ENCODE measurements at regions of chr3 and their contacts with region 1.

Region 1: DNA sequence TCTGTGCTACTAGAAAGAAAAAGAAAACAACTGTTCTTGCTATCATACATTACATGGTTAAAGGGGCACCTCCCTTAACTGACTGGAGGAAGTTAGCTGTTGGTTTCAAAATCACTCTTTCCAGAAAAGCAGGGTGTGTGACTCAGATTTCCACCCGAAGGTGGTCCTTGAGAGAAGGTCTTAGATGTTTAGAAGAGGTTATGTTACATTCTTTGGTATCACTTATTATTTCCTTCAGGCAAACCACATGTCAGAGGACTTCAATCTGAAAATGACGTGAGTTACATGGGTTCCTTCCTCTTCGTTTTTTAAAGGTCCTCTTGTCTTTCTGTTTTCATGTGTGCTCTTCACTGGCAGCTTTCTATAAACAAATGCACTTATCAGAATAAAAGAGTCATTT is 307.9 kb upstream of the CBLB start:
- DNase-seq: peak; percentile 91
- H3K4me3 Mint-ChIP-seq: peak overlapping the region; percentile 77
- H3K27ac Mint-ChIP-seq: peak overlapping the region; percentile 93
- H3K4me1 Mint-ChIP-seq: peaks cover 53% of the 10 kb centered on the region
- H3K27me3 Mint-ChIP-seq: no peaks in the 10 kb centered on the region

Region 2: DNA sequence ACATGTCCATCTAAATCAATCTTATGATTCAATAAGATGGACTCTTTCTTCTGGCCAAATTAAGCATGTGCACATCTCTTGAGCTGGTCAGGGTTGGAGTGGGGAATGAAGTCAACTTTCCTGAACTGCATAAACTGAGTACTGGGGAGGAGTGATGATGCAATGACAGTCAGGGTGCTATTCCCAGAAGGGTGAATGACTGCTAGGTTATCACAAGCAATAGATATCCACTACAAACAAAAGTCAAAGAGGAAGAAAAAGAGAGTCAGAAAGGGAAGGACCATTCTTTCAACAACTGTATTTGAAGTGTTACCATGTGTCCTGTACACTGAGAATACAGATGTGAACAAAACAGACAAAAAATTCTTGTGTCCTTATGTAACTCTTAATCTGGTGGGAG is 740.0 kb before region 1 on chr3:
- intact Hi-C with region 1: no loop called
- DNase-seq: no peak
- H3K4me3 Mint-ChIP-seq: no peak overlapping the region
- H3K27ac Mint-ChIP-seq: no peak overlapping the region
- H3K4me1 Mint-ChIP-seq: no peaks in the 10 kb centered on the region
- H3K27me3 Mint-ChIP-seq: no peaks in the 10 kb centered on the region

Region 3: GRCh38 chr3:105747060-105747541 is 429.6 kb before region 1 on chr3:
- intact Hi-C with region 1: loop called (anchors 2 kb)
- DNase-seq: no peak
- H3K4me3 Mint-ChIP-seq: peak overlapping the region; percentile 64
- H3K27ac Mint-ChIP-seq: peak overlapping the region; percentile 82
- H3K4me1 Mint-ChIP-seq: peaks cover 56% of the 10 kb centered on the region
- H3K27me3 Mint-ChIP-seq: no peaks in the 10 kb centered on the region

Region 4: DNA sequence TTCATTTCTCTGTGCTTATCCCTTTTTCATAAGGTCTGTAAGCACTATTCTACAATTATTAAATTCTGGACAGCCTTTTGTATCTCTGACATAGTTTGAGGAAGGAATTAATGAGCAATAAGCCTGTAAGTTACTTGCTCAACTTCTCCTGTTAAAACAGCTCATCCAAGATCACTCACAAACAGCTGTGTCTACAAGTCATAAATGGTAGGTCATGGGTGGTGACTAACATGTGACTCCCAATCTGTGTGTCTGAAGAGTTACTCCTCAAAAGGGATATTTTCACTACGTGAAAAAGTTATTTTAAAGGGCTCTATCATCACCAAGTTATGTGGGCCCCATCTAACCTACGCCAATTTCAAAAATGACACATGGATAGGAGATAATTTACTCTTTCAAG is 162.8 kb before region 1 on chr3:
- intact Hi-C with region 1: loop called (anchors 1 kb)
- DNase-seq: no peak
- H3K4me3 Mint-ChIP-seq: no peak overlapping the region
- H3K27ac Mint-ChIP-seq: peak overlapping the region; percentile 51
- H3K4me1 Mint-ChIP-seq: peaks cover 31% of the 10 kb centered on the region
- H3K27me3 Mint-ChIP-seq: no peaks in the 10 kb centered on the region

Region 5: GRCh38 chr3:106119614-106120082 is 57.1 kb before region 1 on chr3:
- intact Hi-C with region 1: loop called (anchors 1 kb)
- DNase-seq: no peak
- H3K4me3 Mint-ChIP-seq: peak overlapping the region; percentile 46
- H3K27ac Mint-ChIP-seq: peak overlapping the region; percentile 87
- H3K4me1 Mint-ChIP-seq: peaks cover 28% of the 10 kb centered on the region
- H3K27me3 Mint-ChIP-seq: no peaks in the 10 kb centered on the region

Region 6: DNA sequence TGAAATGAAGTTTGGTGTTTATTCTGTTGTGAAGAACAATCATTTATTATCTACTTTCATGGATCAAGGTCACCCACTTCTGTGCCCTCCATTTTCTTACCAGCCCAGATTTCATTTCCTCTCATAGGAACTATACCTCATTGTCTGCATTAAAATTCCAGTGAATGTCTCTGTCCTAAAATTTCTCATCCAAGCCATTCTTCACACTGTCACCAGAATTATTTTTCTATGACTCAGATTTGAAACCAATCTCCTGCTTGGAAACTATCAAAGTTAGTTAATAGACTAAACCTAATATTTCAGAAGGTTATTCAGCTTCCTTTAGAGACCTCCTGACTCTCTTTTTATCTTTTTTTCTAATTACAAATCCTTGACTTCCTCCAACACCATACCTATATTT is 56.2 kb after region 1 on chr3:
- intact Hi-C with region 1: loop called (anchors 2 kb)
- DNase-seq: no peak
- H3K4me3 Mint-ChIP-seq: no peak overlapping the region
- H3K27ac Mint-ChIP-seq: no peak overlapping the region
- H3K4me1 Mint-ChIP-seq: peaks cover 42% of the 10 kb centered on the region
- H3K27me3 Mint-ChIP-seq: no peaks in the 10 kb centered on the region

Region 7: DNA sequence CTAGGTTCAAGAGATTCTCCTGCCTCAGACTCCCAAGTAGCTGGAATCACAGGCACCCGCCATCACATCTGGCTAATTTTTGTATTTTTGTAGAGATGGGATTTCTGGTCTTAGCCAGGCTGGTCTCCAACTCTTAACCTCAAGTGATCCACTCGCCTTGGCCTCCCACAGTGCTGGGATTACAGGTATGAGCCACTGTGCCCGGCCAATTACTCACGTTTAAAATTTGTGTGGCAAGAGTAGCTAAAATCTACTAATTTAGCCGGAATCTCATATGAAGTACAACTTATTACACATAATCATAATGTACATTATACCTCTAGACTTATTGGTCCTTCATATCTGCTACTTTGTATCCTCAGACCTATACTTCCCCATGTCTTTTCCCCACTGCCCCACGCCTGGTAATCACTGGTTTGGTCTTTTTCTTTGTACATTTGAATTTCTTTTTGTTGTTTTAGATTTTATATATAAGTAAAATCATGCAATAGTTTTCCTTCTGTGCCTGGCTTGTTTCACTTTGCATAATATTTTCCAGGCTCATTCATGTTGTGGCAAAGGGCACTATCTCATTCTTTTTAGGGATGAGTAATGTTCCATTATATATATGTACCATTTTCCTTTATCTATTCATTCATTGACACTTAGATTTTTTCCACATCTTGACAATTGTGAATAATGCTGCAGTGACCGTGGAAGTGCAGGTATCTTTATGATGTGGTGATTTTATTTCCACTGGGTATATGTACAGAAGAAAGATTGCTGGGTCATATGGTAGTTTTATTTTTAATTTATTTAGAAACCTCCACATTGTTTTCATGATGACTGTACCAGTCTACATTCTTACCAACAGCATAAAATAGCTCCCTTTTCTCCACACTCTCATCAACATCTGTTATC is 297.1 kb after region 1 on chr3:
- intact Hi-C with region 1: loop called (anchors 2 kb)
- DNase-seq: no peak
- H3K4me3 Mint-ChIP-seq: no peak overlapping the region
- H3K27ac Mint-ChIP-seq: peak overlapping the region; percentile 83
- H3K4me1 Mint-ChIP-seq: peaks cover 8% of the 10 kb centered on the region
- H3K27me3 Mint-ChIP-seq: no peaks in the 10 kb centered on the region

Region 8: DNA sequence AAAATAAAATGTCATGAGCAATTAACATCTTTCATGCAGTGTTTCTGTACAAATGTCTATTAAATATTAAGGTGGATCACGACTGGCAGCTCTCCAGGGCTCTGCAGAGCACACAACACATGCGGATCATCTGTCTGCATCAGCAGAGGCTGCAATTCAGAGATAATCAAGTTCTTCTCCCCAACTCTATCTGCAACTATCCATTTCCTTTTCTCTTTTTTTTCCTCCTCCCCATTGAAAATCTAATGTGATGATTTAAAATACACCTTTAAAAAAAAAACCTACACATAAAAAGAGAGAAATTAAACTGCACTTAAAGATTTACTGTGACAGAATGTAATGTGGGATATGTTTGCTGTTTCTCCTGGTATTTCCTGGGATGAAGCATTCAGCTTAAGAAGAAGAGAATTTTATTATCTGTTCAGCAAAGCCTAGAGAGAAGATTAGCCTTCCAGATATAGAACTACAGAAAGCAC is 847.9 kb after region 1 on chr3:
- intact Hi-C with region 1: no loop called
- DNase-seq: no peak
- H3K4me3 Mint-ChIP-seq: no peak overlapping the region
- H3K27ac Mint-ChIP-seq: no peak overlapping the region
- H3K4me1 Mint-ChIP-seq: no peaks in the 10 kb centered on the region
- H3K27me3 Mint-ChIP-seq: no peaks in the 10 kb centered on the region

Measured in activated CD4-positive, alpha-beta T cell treated with anti-CD3 and anti-CD28 coated beads, Interleukin-2, amount 10 ng/mL, durations not matched to agents 24 days and 14 days (primary cell).